Activated CD4-positive, alpha-beta memory T cell treated with anti-CD3 and anti-CD28 coated beads for 36 hours (primary cell): ENCODE measurements at regions of chr6 and their contacts with region 1.

Region 1: DNA sequence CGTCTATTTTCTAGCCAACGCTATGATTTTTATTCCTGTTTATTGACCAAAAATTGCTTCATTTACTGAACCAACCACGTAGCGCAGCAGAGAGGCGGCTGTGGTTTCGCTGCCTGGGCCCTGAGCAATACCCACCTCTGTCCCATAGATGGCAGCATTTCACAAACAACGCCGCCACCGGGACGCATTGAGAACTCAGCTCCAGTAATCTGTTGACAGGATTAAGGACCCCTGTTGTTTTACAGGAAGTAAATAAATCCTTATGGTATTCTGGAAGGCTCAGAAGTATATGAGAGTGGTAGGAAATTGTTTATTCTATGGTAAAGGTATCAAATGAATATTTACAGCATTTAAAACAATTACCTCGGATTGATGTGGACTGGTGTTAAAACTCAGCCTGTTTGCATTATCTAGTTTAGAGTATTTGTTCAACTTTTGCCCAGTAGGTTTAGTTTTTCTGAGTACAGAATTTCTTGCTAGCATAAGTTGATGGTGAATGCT is 547.9 kb upstream of the SLC35B3 start:
- DNase-seq: peak; percentile 68
- H3K4me3 Mint-ChIP-seq: no peak overlapping the region
- H3K27ac Mint-ChIP-seq: no peak overlapping the region
- H3K4me1 Mint-ChIP-seq: no peaks in the 10 kb centered on the region
- H3K27me3 Mint-ChIP-seq: peaks cover 3% of the 10 kb centered on the region

Region 2: DNA sequence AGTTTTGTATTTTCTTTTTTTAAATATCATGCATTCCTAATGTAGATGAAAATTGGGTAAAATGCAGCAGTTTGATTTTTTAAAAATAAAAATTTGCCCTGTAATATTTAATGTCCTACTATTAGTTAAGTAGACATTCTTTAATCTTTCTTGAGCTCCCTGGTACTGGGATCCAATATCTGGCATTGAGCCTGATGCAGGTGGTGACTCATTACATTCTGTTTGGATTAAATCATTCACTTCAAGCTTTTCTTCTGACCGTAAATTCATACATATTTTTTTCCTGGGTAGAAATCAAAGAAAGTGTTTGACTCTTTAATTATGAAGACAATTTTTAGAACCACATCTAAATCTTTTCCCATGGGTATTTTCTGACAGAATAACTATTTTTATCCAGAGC is 220.9 kb after region 1 on chr6:
- CTCF ChIA-PET with region 1: no interaction called
- POLR2A ChIA-PET with region 1: no interaction called
- intact Hi-C with region 1: no loop called
- DNase-seq: no peak
- H3K4me3 Mint-ChIP-seq: no peak overlapping the region
- H3K27ac Mint-ChIP-seq: no peak overlapping the region
- H3K4me1 Mint-ChIP-seq: no peaks in the 10 kb centered on the region
- H3K27me3 Mint-ChIP-seq: no peaks in the 10 kb centered on the region

Region 3: DNA sequence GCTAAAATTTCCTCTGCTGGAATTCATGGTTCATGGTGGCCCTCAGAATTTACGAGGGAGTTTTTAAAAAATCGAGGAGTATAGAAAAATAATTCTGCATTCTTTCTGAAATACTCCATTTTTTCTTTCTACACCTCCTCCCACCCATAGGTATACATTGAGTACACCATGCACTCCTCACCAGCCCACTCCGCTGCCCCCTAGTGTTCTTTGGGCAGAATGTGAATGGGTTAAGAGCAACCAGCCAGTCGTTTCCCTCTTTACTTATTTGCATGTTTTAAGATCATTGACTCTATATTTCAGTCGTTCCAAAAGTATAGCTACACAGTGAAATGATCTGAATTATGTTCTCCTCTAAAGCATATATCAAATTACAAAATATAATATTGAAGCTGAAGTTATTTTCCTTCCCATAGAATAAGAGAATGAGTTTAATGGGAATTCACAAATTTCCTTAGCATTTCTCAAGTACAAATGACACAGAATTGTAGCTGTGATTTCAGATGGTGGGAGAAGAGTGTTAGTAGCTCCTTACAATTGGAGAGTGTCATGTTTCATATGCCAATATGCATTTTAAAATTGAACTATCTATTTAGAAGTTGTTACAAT is 429.8 kb after region 1 on chr6:
- CTCF ChIA-PET with region 1: no interaction called
- POLR2A ChIA-PET with region 1: no interaction called
- intact Hi-C with region 1: loop called (anchors 2 kb)
- DNase-seq: peak; percentile 12
- H3K4me3 Mint-ChIP-seq: no peak overlapping the region
- H3K27ac Mint-ChIP-seq: no peak overlapping the region
- H3K4me1 Mint-ChIP-seq: no peaks in the 10 kb centered on the region
- H3K27me3 Mint-ChIP-seq: no peaks in the 10 kb centered on the region

Region 4: GRCh38 chr6:9540534-9541126 is 557.4 kb after region 1 on chr6:
- CTCF ChIA-PET with region 1: no interaction called
- POLR2A ChIA-PET with region 1: no interaction called
- intact Hi-C with region 1: loop called (anchors 2 kb)
- DNase-seq: no peak
- H3K4me3 Mint-ChIP-seq: no peak overlapping the region
- H3K27ac Mint-ChIP-seq: no peak overlapping the region
- H3K4me1 Mint-ChIP-seq: no peaks in the 10 kb centered on the region
- H3K27me3 Mint-ChIP-seq: no peaks in the 10 kb centered on the region

Region 5: DNA sequence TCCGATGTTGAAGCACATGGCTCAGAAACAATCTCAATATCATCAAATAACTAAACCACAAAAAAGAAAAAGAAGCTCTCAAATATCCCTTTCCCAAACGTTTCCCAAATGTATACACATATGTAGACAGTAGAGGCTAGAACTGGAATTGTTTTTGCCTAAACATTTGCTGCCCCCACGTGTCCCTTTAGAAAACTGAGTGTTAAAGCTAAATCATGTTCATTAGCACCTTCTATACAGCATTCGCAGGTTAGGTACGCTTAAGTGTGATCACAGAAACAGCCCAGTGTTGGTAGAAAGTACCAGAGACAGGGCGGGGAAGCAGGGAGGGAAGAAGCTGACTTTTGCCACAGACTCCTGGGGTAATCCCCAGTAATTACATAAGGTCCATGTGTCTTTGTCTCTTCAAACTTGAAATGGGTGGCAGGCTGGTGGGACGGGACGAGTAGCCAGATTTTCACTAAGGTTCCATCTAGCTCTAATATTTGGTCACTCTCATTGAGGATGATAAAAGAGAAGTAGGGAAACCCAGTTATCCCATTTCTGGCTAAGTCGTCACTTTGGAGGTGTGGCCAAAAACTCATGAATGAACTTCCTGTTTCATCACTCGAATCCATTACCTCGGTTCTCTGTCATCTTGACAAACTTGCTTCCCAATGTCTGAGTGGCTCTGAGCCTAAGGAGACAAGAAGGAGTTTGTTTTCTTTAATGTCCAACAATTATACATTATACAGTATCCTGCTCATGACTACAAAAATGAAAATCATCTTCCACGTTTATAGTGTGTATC is 1446.6 kb after region 1 on chr6:
- CTCF ChIA-PET with region 1: interaction called, 16 read pairs
- POLR2A ChIA-PET with region 1: no interaction called
- intact Hi-C with region 1: no loop called
- DNase-seq: no peak
- H3K4me3 Mint-ChIP-seq: peak overlapping the region; percentile 43
- H3K27ac Mint-ChIP-seq: no peak overlapping the region
- H3K4me1 Mint-ChIP-seq: peaks cover 20% of the 10 kb centered on the region
- H3K27me3 Mint-ChIP-seq: peaks cover 45% of the 10 kb centered on the region

Region 6: GRCh38 chr6:10434692-10435376 is 1451.6 kb after region 1 on chr6:
- CTCF ChIA-PET with region 1: interaction called, 16 read pairs
- POLR2A ChIA-PET with region 1: no interaction called
- intact Hi-C with region 1: no loop called
- DNase-seq: no peak
- H3K4me3 Mint-ChIP-seq: no peak overlapping the region
- H3K27ac Mint-ChIP-seq: no peak overlapping the region
- H3K4me1 Mint-ChIP-seq: peaks cover 7% of the 10 kb centered on the region
- H3K27me3 Mint-ChIP-seq: peaks cover 16% of the 10 kb centered on the region